ENCODE measurements at regions of chr11 and their contacts with region 1.

Region 1: GRCh38 chr11:2420502-2421225 is 20.1 kb downstream of the TSSC4 start:
- DNase-seq: peak; percentile 75
- H3K4me3 ChIP-seq: no peak overlapping the region
- H3K27ac ChIP-seq: no peak overlapping the region
- H3K4me1 ChIP-seq: no peaks in the 10 kb centered on the region
- H3K27me3 ChIP-seq: no peaks in the 10 kb centered on the region
- CTCF ChIP-seq: peak; percentile 86

Region 2: GRCh38 chr11:790721-791564 is 1629.7 kb before region 1 on chr11:
- CTCF ChIA-PET with region 1: no interaction called
- POLR2A ChIA-PET with region 1: interaction called, 16 read pairs
- intact Hi-C with region 1: no loop called
- DNase-seq: no peak
- H3K4me3 ChIP-seq: no peak overlapping the region
- H3K27ac ChIP-seq: no peak overlapping the region
- H3K4me1 ChIP-seq: peaks cover 10% of the 10 kb centered on the region
- H3K27me3 ChIP-seq: no peaks in the 10 kb centered on the region
- CTCF ChIP-seq: no peak

Region 3: DNA sequence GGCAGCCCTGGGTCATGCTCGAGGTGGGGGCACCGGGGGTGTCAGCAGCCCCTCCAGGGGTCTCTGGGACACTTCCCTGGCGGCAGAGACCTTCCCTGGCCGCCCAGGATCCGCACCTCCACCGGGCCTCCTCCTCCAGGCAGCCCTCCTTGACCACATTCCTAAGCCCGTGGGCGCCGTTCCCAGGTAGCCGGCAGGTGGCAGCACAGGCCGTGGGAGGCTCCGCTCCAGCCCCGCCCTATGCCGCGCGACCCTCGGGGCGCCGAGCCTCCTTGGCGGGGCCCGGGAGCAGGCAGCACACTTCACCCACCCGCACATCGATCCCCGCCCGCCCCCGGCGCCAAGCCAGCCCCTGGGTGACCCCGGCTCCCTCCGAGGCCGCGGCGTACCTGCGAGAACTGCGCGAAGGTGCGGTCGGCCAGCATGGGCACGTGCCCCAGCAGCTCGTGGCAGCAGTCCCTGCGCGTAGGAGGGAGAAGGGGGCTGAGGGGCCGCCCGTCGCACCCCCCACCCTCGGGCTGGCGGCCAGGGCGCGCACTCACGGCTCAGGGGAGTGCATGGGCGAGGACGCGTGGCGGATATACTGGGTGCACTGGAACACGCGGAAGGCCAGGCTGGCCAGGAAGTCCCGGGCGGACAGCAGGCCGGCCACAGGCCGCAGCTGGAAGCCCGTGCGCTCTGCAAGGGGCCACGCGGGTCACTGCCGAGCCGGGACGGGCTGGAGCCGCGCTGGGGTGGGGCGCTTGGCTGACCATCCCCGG is 254.4 kb before region 1 on chr11:
- CTCF ChIA-PET with region 1: interaction called, 4 read pairs
- POLR2A ChIA-PET with region 1: no interaction called
- intact Hi-C with region 1: loop called (anchors 1 kb)
- DNase-seq: peak; percentile 35
- H3K4me3 ChIP-seq: no peak overlapping the region
- H3K27ac ChIP-seq: no peak overlapping the region
- H3K4me1 ChIP-seq: no peaks in the 10 kb centered on the region
- H3K27me3 ChIP-seq: no peaks in the 10 kb centered on the region
- CTCF ChIP-seq: peak; percentile 61

Region 4: GRCh38 chr11:2196970-2197770 is 223.5 kb before region 1 on chr11:
- CTCF ChIA-PET with region 1: interaction called, 3 read pairs
- POLR2A ChIA-PET with region 1: no interaction called
- intact Hi-C with region 1: loop called (anchors 2 kb)
- DNase-seq: peak; percentile 58
- H3K4me3 ChIP-seq: no peak overlapping the region
- H3K27ac ChIP-seq: no peak overlapping the region
- H3K4me1 ChIP-seq: no peaks in the 10 kb centered on the region
- H3K27me3 ChIP-seq: no peaks in the 10 kb centered on the region
- CTCF ChIP-seq: peak; percentile 68

Region 5: DNA sequence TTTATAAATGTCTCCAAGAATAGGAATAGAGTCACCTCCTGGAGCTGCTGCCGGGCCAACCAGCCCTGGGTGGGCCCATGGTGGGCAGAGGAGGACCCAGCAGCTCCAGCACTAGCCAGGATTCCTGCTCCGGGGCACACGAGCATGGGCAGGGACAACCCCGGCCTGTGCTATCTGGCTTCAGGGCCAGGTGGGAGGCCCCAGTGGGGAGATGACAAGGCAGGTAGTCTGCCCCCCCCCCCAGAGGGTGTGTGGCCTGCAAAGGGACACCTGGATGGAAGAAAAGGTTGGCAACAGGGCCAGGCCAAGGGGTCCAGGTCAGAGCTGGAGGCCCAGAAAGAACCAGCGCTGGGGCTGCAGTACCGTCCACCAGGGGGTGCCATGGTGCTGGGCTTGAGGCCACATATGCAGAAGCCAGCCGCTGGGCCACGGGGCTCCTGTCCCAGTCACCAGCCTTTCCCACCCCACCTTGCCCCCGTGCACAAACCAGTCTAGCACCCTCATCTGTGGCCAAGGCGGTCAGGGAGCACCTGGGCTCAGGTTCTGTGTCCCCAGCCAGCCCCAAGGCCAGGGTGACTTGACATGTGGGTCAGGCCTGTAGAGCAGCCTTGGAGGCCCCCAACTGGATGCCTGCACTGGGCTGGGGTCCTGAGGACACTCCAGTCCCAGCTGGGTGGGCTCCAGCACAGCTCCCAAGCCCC is 115.4 kb before region 1 on chr11:
- CTCF ChIA-PET with region 1: interaction called, 74 read pairs
- POLR2A ChIA-PET with region 1: no interaction called
- intact Hi-C with region 1: loop called (anchors 1 kb)
- DNase-seq: peak; percentile 63
- H3K4me3 ChIP-seq: no peak overlapping the region
- H3K27ac ChIP-seq: no peak overlapping the region
- H3K4me1 ChIP-seq: peaks cover 6% of the 10 kb centered on the region
- H3K27me3 ChIP-seq: no peaks in the 10 kb centered on the region
- CTCF ChIP-seq: peak; percentile 83

Measured in A673 (cell line).